ENCODE measurements at regions of chr15 and their contacts with region 1.

Region 1: GRCh38 chr15:34818526-34818925 is 23.2 kb upstream of the ACTC1 start:
- DNase-seq: no peak
- ATAC-seq: no peak
- H3K4me3 ChIP-seq: no peak overlapping the region
- H3K27ac ChIP-seq: no peak overlapping the region
- H3K4me1 ChIP-seq: no peaks in the 10 kb centered on the region
- H3K27me3 ChIP-seq: no peaks in the 10 kb centered on the region
- CTCF ChIP-seq: no peak

Region 2: DNA sequence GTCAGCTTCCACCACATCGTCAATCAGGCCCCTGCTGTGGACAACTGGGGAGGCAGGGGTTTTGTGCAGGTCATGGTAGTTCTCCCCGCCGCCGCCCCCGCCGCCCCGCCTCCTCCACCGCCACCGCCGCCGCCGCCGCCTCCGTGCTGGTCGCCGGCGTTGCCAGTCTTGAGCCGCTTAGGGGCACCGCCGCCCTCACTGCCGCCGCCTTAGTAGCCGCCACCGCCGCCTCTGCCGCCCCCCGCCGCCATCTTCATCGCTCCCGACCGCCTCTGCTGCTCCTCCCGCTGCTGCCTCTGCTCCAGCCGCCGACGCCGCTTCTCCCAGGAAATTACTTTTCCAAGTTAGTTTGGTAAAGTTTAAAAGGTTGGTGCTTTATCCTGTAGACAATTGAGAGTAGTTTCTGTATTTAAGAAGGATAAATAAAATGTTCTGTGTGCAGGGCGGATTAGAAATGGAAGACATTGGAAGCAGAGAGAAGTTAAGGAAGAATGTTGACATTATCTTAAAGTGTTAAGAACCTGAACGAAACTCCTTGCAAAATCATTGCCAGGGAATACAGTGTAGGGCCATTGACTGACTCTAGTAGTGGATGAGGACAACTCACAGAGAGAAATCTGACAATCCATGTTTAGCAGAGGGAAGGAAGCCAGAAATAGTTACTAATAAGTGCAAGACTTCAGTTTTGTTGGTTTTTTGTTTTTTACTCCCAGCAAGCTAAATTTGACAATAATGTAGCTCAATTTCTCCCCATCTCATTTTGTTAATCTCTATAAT is 327.9 kb before region 1 on chr15:
- CTCF ChIA-PET with region 1: no interaction called
- POLR2A ChIA-PET with region 1: no interaction called
- in situ Hi-C with region 1: no loop called
- intact Hi-C with region 1: no loop called
- DNase-seq: no peak
- ATAC-seq: no peak
- H3K4me3 ChIP-seq: peak overlapping the region in 1 of 2 experiments; percentile 29; a peak in 2 of 4 replicates
- H3K27ac ChIP-seq: no peak overlapping the region
- H3K4me1 ChIP-seq: no peaks in the 10 kb centered on the region
- H3K27me3 ChIP-seq: peaks cover 11% of the 10 kb centered on the region; the same call in 1 of the 2 replicates
- CTCF ChIP-seq: no peak

Region 3: DNA sequence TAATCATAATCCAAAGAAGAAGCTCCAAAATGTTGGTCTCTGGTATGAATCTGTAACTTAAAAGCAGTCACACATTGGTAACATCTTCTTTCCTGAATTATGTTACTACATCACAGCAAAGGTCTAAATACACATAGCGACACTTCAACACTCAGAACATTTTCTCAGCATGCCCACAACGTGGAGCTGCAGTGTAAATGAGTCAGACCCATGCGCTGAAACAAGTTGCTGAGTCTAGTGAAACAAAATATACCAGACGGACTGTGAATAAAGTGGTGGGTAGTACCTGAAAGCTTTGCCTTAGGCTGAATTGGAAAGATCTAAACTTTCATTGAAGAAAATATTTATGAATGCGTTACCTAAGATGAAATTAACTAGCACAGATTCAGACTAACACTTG is 201.9 kb before region 1 on chr15:
- CTCF ChIA-PET with region 1: no interaction called
- POLR2A ChIA-PET with region 1: no interaction called
- in situ Hi-C with region 1: no loop called
- intact Hi-C with region 1: loop called (anchors 10 kb)
- DNase-seq: no peak
- ATAC-seq: peak; percentile 86
- H3K4me3 ChIP-seq: no peak overlapping the region
- H3K27ac ChIP-seq: no peak overlapping the region
- H3K4me1 ChIP-seq: no peaks in the 10 kb centered on the region
- H3K27me3 ChIP-seq: peaks cover 7% of the 10 kb centered on the region
- CTCF ChIP-seq: peak; percentile 33; the same call in 1 of the 2 replicates

Region 4: GRCh38 chr15:35023794-35024193 is 205.3 kb after region 1 on chr15:
- CTCF ChIA-PET with region 1: no interaction called
- POLR2A ChIA-PET with region 1: no interaction called
- in situ Hi-C with region 1: no loop called
- intact Hi-C with region 1: no loop called
- DNase-seq: no peak
- ATAC-seq: no peak
- H3K4me3 ChIP-seq: no peak overlapping the region
- H3K27ac ChIP-seq: no peak overlapping the region
- H3K4me1 ChIP-seq: no peaks in the 10 kb centered on the region
- H3K27me3 ChIP-seq: 0 out of 2 replicates have a peak, but pooled peaks cover 2% of the 10 kb centered on the region
- CTCF ChIP-seq: no peak

Region 5: GRCh38 chr15:35555244-35555643 is 736.7 kb after region 1 on chr15:
- CTCF ChIA-PET with region 1: interaction called, 15 read pairs
- POLR2A ChIA-PET with region 1: no interaction called
- in situ Hi-C with region 1: no loop called
- intact Hi-C with region 1: no loop called
- DNase-seq: no peak
- ATAC-seq: no peak
- H3K4me3 ChIP-seq: no peak overlapping the region
- H3K27ac ChIP-seq: no peak overlapping the region
- H3K4me1 ChIP-seq: no peaks in the 10 kb centered on the region
- H3K27me3 ChIP-seq: no peaks in the 10 kb centered on the region
- CTCF ChIP-seq: no peak